ENCODE measurements at regions of chr22 and their contacts with region 1.

Region 1: GRCh38 chr22:46592390-46592872 is 27.8 kb upstream of the GRAMD4 start:
- DNase-seq: peak; percentile 64
- ATAC-seq: peak; percentile 45
- H3K4me3 Mint-ChIP-seq: peak overlapping the region; percentile 79
- H3K27ac Mint-ChIP-seq: peak overlapping the region; percentile 91
- H3K4me1 Mint-ChIP-seq: peaks cover 70% of the 10 kb centered on the region
- H3K27me3 Mint-ChIP-seq: no peaks in the 10 kb centered on the region
- CTCF ChIP-seq: no peak

Region 2: GRCh38 chr22:46150034-46150654 is 442.3 kb before region 1 on chr22 and contains the start of gene PPARA:
- CTCF ChIA-PET with region 1: no interaction called
- POLR2A ChIA-PET with region 1: no interaction called
- intact Hi-C with region 1: loop called (anchors 1 kb)
- DNase-seq: peak; percentile 92
- ATAC-seq: peak; percentile 80
- H3K4me3 Mint-ChIP-seq: peak within 1 kb of the TSS; percentile 87
- H3K27ac Mint-ChIP-seq: peak within 1 kb of the TSS; percentile 73
- H3K4me1 Mint-ChIP-seq: peaks cover 23% of the 10 kb centered on the region
- H3K27me3 Mint-ChIP-seq: no peaks in the 10 kb centered on the region
- CTCF ChIP-seq: no peak
- total RNA-seq, gene PPARA: 17.7 and 23.0 TPM in 2 replicates

Region 3: GRCh38 chr22:46563381-46564083 is 28.9 kb before region 1 on chr22:
- CTCF ChIA-PET with region 1: interaction called, 14 read pairs
- POLR2A ChIA-PET with region 1: interaction called, 13 read pairs
- intact Hi-C with region 1: loop called (anchors 1 kb)
- DNase-seq: peak; percentile 77
- ATAC-seq: peak; percentile 89
- H3K4me3 Mint-ChIP-seq: peak overlapping the region; percentile 55
- H3K27ac Mint-ChIP-seq: no peak overlapping the region
- H3K4me1 Mint-ChIP-seq: peaks cover 17% of the 10 kb centered on the region
- H3K27me3 Mint-ChIP-seq: peaks cover 2% of the 10 kb centered on the region
- CTCF ChIP-seq: peak; percentile 45

Region 4: DNA sequence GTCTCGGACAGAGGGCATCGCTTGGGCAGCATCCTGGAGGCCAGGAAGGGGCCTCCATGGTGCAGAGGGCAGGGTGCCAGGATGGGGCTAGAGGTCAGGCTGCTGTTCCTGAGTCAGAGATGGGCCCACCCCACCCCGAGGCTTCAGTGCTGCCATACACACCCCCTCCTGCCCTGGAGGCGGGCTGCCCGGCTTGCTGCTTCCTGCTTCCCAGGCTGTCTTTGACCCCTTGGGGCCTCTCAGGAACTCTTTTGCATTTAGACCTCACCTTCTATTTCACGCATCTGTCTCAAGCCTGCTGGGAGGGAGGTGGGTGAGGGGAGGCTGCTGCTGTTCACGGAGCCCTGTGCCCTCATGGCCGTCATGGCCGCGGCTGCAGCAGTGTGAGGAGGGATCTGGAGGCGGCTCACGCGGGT is 21.2 kb after region 1 on chr22:
- CTCF ChIA-PET with region 1: no interaction called
- POLR2A ChIA-PET with region 1: interaction called, 5 read pairs
- intact Hi-C with region 1: loop called (anchors 1 kb)
- DNase-seq: no peak
- ATAC-seq: peak; percentile 59
- H3K4me3 Mint-ChIP-seq: peak overlapping the region; percentile 86
- H3K27ac Mint-ChIP-seq: peak overlapping the region; percentile 84
- H3K4me1 Mint-ChIP-seq: peaks cover 35% of the 10 kb centered on the region
- H3K27me3 Mint-ChIP-seq: no peaks in the 10 kb centered on the region
- CTCF ChIP-seq: no peak

Region 5: DNA sequence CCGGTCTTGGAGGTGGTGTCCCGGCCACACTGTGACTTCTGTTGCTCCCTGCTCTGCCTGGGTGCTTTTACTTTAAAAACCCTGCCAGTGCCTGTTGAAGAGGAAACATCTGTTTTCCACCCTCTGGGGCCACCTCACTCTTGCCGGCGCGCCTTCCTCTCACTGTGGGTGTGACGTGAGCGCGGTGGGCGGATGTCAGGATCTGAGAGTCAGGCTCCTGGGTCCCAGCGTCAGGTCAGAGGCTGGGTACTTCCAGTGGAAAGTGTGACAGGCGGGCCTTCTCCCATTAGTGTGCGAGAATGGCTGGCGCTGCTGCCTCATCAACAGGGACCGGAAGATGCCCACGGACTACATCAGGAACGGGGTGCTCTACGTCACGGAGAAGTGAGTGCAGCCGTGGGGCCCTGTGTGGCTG is 81.9 kb after region 1 on chr22:
- CTCF ChIA-PET with region 1: no interaction called
- POLR2A ChIA-PET with region 1: interaction called, 3 read pairs
- intact Hi-C with region 1: loop called (anchors 1 kb)
- DNase-seq: peak; percentile 73
- ATAC-seq: peak; percentile 81
- H3K4me3 Mint-ChIP-seq: peak overlapping the region; percentile 76
- H3K27ac Mint-ChIP-seq: peak overlapping the region; percentile 77
- H3K4me1 Mint-ChIP-seq: peaks cover 34% of the 10 kb centered on the region
- H3K27me3 Mint-ChIP-seq: no peaks in the 10 kb centered on the region
- CTCF ChIP-seq: no peak

Region 6: DNA sequence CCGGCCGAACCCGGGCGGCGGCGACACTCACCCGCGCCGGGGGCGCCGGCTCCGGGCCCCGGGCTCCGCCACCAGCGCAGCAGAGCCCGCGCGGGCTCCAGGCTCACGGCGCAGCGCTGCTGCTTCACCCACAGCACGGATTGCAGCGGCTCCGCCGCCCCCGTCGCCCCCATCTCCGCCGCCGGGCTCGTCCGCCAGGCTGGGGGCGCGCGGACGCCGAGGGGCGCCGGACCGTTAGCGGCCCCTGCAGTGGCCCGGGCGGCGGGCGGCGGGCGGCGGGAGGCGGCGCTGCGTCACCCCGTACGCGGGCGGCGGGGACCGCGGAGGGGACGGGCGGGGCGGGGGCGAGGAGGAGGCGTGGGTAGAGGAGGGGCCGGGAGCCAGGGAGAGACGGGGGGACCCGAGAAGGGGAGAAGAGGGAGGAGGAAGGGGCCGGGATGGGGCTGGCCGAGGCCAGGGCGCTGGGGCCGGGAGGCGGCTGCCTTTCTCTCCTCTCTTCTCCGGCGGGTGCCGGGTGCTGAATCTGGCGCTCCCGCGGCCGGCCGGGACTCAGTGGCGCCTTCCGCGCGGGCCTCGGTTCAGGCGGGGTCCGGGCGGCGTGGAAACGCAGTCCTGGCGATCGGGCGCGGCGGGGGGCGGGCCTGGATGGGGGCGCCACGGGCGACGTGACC is 145.7 kb after region 1 on chr22 and contains the start of gene CERK:
- CTCF ChIA-PET with region 1: no interaction called
- POLR2A ChIA-PET with region 1: interaction called, 4 read pairs
- intact Hi-C with region 1: loop called (anchors 2 kb)
- DNase-seq: peak; percentile 61
- ATAC-seq: peak; percentile 51
- H3K4me3 Mint-ChIP-seq: peak within 1 kb of the TSS; percentile 89
- H3K27ac Mint-ChIP-seq: peak within 1 kb of the TSS; percentile 82
- H3K4me1 Mint-ChIP-seq: peaks cover 42% of the 10 kb centered on the region
- H3K27me3 Mint-ChIP-seq: no peaks in the 10 kb centered on the region
- CTCF ChIP-seq: no peak
- total RNA-seq, gene CERK: 13.8 and 16.9 TPM in 2 replicates

Region 7: DNA sequence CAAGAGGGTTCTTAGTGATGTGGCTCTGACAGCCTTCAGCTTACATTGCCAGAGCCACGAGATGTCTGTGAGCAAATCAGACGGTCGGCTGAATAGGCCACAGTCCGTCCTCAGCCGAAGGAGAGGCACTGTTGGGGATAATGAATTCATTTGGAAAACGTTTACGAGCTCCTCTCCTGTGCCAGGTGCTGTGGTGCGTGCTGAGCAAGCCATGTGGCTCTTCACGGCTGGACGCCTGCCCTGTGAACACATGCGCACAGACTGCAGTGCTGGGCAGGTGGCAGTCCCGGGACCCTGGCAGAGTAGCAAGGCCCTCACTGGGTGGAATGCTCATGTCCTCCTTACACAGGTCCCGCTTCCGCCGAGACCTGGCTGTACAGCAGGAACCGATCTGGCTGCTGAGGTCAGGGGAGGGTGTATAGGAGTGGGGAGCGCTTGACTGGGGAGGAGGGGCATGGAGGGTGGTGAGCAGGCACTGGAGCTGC is 176.8 kb after region 1 on chr22:
- CTCF ChIA-PET with region 1: no interaction called
- POLR2A ChIA-PET with region 1: interaction called, 16 read pairs
- intact Hi-C with region 1: loop called (anchors 2 kb)
- DNase-seq: peak; percentile 49
- ATAC-seq: peak; percentile 43
- H3K4me3 Mint-ChIP-seq: peak overlapping the region; percentile 83
- H3K27ac Mint-ChIP-seq: peak overlapping the region; percentile 93
- H3K4me1 Mint-ChIP-seq: peaks cover 90% of the 10 kb centered on the region
- H3K27me3 Mint-ChIP-seq: no peaks in the 10 kb centered on the region
- CTCF ChIP-seq: no peak

Measured in activated B cell treated with CpG ODN at 0.5 μM for 24 hours (primary cell).